Aorta (tissue), 5 donors: ENCODE measurements at regions of chrX and their contacts with region 1.

Region 1: GRCh38 chrX:68511255-68511654 is 12.4 kb downstream of the YIPF6 start:
- DNase-seq: no peak
- ATAC-seq: no peak
- H3K4me3 ChIP-seq: no peak overlapping the region
- H3K27ac ChIP-seq: no peak overlapping the region
- H3K4me1 ChIP-seq: no peaks in the 10 kb centered on the region
- H3K27me3 ChIP-seq: no peaks in the 10 kb centered on the region

Region 2: DNA sequence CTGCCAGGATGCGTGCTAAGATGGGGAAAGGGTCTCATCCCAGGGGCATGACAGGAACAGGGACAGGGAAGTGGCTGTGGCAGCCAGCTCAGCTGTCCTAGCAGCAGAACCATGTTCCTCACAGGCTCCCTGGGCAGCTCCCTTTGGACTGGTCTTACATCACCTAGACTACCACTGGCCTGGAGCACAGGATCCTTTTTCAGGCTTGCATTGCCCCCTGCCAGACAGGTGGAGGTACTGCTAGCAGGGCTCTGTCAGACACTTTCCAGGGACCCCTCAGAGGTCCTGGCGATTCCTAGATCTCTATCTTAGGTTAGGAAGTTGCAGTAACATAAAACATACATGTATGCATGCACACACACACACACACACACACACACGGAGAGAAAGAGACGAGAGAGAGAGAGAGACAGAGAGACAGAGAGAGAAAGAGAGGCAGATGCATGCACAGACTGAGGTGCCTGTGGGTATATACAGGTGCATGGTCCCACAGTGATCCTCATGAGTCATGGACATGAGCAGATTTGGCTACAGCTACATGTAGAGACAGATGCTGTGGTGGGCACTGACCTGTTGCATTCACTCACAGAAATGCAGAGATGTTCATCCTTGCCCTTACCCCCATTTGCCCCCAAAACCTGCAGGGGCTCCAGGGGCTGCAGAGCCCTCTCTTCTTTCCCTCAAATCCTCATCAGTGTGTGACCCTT is 199.8 kb after region 1 on chrX:
- intact Hi-C with region 1: loop called in 1 of 2 experiments (anchors 5 kb)
- DNase-seq: no peak
- ATAC-seq: no peak
- H3K4me3 ChIP-seq: no peak overlapping the region
- H3K27ac ChIP-seq: no peak overlapping the region
- H3K4me1 ChIP-seq: no peaks in the 10 kb centered on the region
- H3K27me3 ChIP-seq: no peaks in the 10 kb centered on the region

Region 3: GRCh38 chrX:68807818-68808217 is 296.6 kb after region 1 on chrX:
- intact Hi-C with region 1: loop called in 1 of 2 experiments (anchors 10 kb)
- DNase-seq: no peak
- ATAC-seq: no peak
- H3K4me3 ChIP-seq: no peak overlapping the region
- H3K27ac ChIP-seq: no peak overlapping the region
- H3K4me1 ChIP-seq: no peaks in the 10 kb centered on the region
- H3K27me3 ChIP-seq: no peaks in the 10 kb centered on the region